ENCODE measurements at regions of chr18 and their contacts with region 1.

Region 1: GRCh38 chr18:51211552-51211951 is 14.1 kb upstream of the MEX3C start:
- DNase-seq: peak; percentile 63
- H3K4me3 Mint-ChIP-seq: peak overlapping the region; percentile 7
- H3K27ac Mint-ChIP-seq: peak overlapping the region; percentile 62
- H3K4me1 Mint-ChIP-seq: peaks cover 14% of the 10 kb centered on the region
- H3K27me3 Mint-ChIP-seq: peaks cover 2% of the 10 kb centered on the region

Region 2: GRCh38 chr18:51188024-51188701 is 23.4 kb before region 1 on chr18:
- intact Hi-C with region 1: no loop called
- DNase-seq: no peak
- H3K4me3 Mint-ChIP-seq: peak overlapping the region; percentile 30
- H3K27ac Mint-ChIP-seq: no peak overlapping the region
- H3K4me1 Mint-ChIP-seq: peaks cover 72% of the 10 kb centered on the region
- H3K27me3 Mint-ChIP-seq: no peaks in the 10 kb centered on the region

Region 3: GRCh38 chr18:51235011-51235789 is 23.6 kb after region 1 on chr18:
- intact Hi-C with region 1: loop called (anchors 1 kb)
- DNase-seq: peak; percentile 11
- H3K4me3 Mint-ChIP-seq: peak overlapping the region; percentile 16
- H3K27ac Mint-ChIP-seq: peak overlapping the region; percentile 48
- H3K4me1 Mint-ChIP-seq: peaks cover 31% of the 10 kb centered on the region
- H3K27me3 Mint-ChIP-seq: no peaks in the 10 kb centered on the region

Region 4: GRCh38 chr18:51908598-51908944 is 697.0 kb after region 1 on chr18:
- intact Hi-C with region 1: no loop called
- DNase-seq: no peak
- H3K4me3 Mint-ChIP-seq: no peak overlapping the region
- H3K27ac Mint-ChIP-seq: no peak overlapping the region
- H3K4me1 Mint-ChIP-seq: no peaks in the 10 kb centered on the region
- H3K27me3 Mint-ChIP-seq: no peaks in the 10 kb centered on the region

Region 5: GRCh38 chr18:53126201-53126600 is 1914.6 kb after region 1 on chr18:
- intact Hi-C with region 1: no loop called
- DNase-seq: no peak
- H3K4me3 Mint-ChIP-seq: no peak overlapping the region
- H3K27ac Mint-ChIP-seq: no peak overlapping the region
- H3K4me1 Mint-ChIP-seq: no peaks in the 10 kb centered on the region
- H3K27me3 Mint-ChIP-seq: no peaks in the 10 kb centered on the region

Measured in activated T-helper 1 cell treated with anti-CD3 and anti-CD28 coated beads, Interleukin-12 subunit alpha, Interleukin-12 subunit beta, Interleukin-2, Interleukin-4 antibody, amounts not matched to agents 30 ng/mL and 10 ng/mL and 1 ng/mL, durations not matched to agents 14 hours and 24 hours and 36 hours (primary cell).